ENCODE measurements at regions of chr7 and their contacts with region 1.

Region 1: GRCh38 chr7:151570366-151570915 is 50.7 kb upstream of the RHEB start:
- DNase-seq: no peak
- H3K4me3 Mint-ChIP-seq: no peak overlapping the region
- H3K27ac Mint-ChIP-seq: no peak overlapping the region
- H3K4me1 Mint-ChIP-seq: no peaks in the 10 kb centered on the region
- H3K27me3 Mint-ChIP-seq: no peaks in the 10 kb centered on the region
- CTCF ChIP-seq: peak; percentile 37

Region 2: DNA sequence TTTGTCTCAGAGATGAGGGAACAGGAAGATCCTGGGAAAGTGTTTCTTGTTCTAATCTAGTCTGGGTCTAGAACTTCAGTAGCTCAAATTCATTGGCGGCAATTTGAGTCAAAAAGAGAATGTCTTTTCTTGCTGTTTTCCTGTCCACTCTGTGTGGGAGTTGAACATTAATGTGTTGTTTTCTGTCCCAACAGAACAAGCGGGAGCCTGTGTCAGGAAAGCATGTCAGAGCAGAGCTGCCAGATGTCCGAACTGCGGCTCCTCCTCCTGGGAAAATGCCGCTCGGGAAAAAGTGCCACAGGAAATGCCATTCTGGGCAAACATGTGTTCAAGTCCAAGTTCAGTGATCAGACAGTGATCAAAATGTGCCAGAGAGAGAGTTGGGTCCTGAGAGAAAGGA is 1104.0 kb before region 1 on chr7:
- CTCF ChIA-PET with region 1: no interaction called
- intact Hi-C with region 1: no loop called
- DNase-seq: no peak
- H3K4me3 Mint-ChIP-seq: no peak overlapping the region
- H3K27ac Mint-ChIP-seq: no peak overlapping the region
- H3K4me1 Mint-ChIP-seq: no peaks in the 10 kb centered on the region
- H3K27me3 Mint-ChIP-seq: peaks cover 44% of the 10 kb centered on the region
- CTCF ChIP-seq: no peak

Region 3: GRCh38 chr7:151459726-151460473 is 110.5 kb before region 1 on chr7:
- CTCF ChIA-PET with region 1: no interaction called
- intact Hi-C with region 1: no loop called
- DNase-seq: peak; percentile 51
- H3K4me3 Mint-ChIP-seq: peak overlapping the region; percentile 53
- H3K27ac Mint-ChIP-seq: peak overlapping the region; percentile 50
- H3K4me1 Mint-ChIP-seq: peaks cover 20% of the 10 kb centered on the region
- H3K27me3 Mint-ChIP-seq: no peaks in the 10 kb centered on the region
- CTCF ChIP-seq: no peak

Region 4: DNA sequence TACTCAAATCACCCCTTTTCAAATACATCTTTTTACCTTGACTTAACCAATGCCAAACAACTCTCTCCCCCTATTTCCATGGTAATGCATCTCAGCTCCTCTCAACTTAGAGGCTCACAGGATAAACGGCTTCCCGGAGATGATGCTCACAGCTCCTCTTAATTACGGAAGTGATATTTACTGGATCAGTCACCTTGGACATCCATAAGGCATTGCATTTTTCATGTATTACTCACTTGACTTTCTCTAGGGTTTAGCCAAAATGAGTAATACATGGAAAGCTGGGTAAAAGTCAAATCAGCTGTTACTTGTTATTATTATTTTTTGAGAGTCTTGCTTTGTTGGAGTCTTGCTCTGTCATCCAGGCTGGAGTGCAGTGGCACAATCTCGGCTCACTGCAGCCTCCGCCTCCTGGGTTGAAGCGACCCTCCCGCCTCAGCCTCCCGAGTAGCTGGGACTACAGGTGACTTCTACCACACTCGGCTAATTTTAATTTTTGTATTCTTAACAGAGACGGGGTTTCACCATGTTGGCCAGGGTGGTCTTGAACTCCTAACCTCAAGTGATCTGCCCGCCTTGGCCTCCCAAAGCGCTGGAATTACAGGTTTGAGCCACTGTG is 22.5 kb after region 1 on chr7:
- CTCF ChIA-PET with region 1: no interaction called
- intact Hi-C with region 1: no loop called
- DNase-seq: no peak
- H3K4me3 Mint-ChIP-seq: no peak overlapping the region
- H3K27ac Mint-ChIP-seq: no peak overlapping the region
- H3K4me1 Mint-ChIP-seq: peaks cover 20% of the 10 kb centered on the region
- H3K27me3 Mint-ChIP-seq: no peaks in the 10 kb centered on the region
- CTCF ChIP-seq: no peak

Region 5: DNA sequence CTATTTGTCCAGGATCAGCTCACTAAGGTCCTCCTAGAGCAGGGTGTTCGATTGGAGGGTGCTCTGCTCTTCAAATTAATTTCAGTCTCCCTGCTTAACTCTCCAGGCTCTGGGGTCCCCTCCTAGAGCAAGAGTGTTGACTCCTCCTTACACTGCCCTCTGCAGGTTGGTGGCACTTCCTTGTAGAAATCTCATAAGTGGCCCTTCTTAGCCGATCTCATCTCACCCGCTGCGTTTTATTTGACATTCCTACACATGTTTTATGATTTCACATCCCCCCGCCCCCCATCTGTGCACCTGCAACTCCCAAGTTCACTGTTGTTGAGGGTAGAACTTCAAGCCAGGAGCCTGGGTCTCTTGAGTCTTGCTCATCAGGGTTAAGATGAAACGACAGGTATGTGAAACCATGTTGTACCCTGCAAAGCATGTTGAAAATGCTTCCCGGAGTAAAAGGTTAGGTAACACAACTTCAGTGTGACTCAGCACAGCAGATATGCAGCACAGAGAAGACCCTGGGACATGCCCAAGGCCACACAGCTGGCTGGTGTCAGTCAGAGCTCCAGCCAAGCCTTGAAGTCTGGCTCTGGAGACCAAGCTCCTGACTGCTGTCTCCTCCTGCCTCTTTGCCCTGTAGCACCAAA is 135.3 kb after region 1 on chr7:
- CTCF ChIA-PET with region 1: no interaction called
- intact Hi-C with region 1: loop called (anchors 5 kb)
- DNase-seq: peak; percentile 58
- H3K4me3 Mint-ChIP-seq: no peak overlapping the region
- H3K27ac Mint-ChIP-seq: peak overlapping the region; percentile 50
- H3K4me1 Mint-ChIP-seq: peaks cover 16% of the 10 kb centered on the region
- H3K27me3 Mint-ChIP-seq: no peaks in the 10 kb centered on the region
- CTCF ChIP-seq: peak; percentile 45

Region 6: DNA sequence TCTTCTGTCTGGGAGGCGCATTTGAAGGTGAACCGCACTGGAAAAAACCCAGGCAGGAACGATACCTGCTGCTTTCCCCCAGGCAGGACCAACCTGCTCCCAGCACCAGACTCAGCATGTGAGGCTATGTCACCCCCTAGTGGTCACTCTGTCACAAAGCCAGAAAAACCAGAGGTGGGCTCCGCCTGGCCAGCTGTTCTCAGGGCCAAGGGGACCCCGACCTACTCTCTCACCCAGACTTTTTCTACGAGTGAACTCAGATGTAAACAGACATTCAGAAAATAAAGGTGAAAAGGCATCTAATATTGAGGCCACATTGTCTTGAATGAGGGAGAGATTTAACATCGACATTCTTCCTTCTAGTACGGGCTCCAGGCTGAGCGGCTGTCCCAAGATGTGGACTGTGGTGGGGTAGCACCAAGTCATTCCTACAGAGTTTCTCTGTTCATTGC is 189.2 kb after region 1 on chr7:
- CTCF ChIA-PET with region 1: no interaction called
- intact Hi-C with region 1: loop called (anchors 1 kb)
- DNase-seq: peak; percentile 80
- H3K4me3 Mint-ChIP-seq: no peak overlapping the region
- H3K27ac Mint-ChIP-seq: no peak overlapping the region
- H3K4me1 Mint-ChIP-seq: peaks cover 36% of the 10 kb centered on the region
- H3K27me3 Mint-ChIP-seq: no peaks in the 10 kb centered on the region
- CTCF ChIP-seq: peak; percentile 93

Measured in Calu3 (cell line).